PC-3 (cell line): ENCODE measurements at regions of chr3 and their contacts with region 1.

Region 1: GRCh38 chr3:133457465-133458067 is 57.7 kb downstream of the BFSP2 start:
- DNase-seq: peak; percentile 33
- ATAC-seq: no peak
- H3K4me3 ChIP-seq: no peak overlapping the region
- H3K27ac ChIP-seq: no peak overlapping the region
- H3K4me1 ChIP-seq: peaks cover 20% of the 10 kb centered on the region
- H3K27me3 ChIP-seq: no peaks in the 10 kb centered on the region
- CTCF ChIP-seq: peak; percentile 54; the same call in 1 of the 2 replicates

Region 2: GRCh38 chr3:133644768-133645167 is 187.2 kb after region 1 on chr3:
- CTCF ChIA-PET with region 1: no interaction called
- POLR2A ChIA-PET with region 1: no interaction called
- intact Hi-C with region 1: loop called (anchors 10 kb)
- DNase-seq: peak; percentile 85
- ATAC-seq: peak; percentile 95
- H3K4me3 ChIP-seq: no peak overlapping the region
- H3K27ac ChIP-seq: peak overlapping the region; percentile 19; the same call in 1 of the 2 replicates
- H3K4me1 ChIP-seq: peaks cover 20% of the 10 kb centered on the region
- H3K27me3 ChIP-seq: no peaks in the 10 kb centered on the region
- CTCF ChIP-seq: no peak

Region 3: GRCh38 chr3:133949438-133949837 is 491.9 kb after region 1 on chr3:
- CTCF ChIA-PET with region 1: no interaction called
- POLR2A ChIA-PET with region 1: no interaction called
- intact Hi-C with region 1: no loop called
- DNase-seq: no peak
- ATAC-seq: no peak
- H3K4me3 ChIP-seq: no peak overlapping the region
- H3K27ac ChIP-seq: no peak overlapping the region
- H3K4me1 ChIP-seq: peaks cover 15% of the 10 kb centered on the region
- H3K27me3 ChIP-seq: no peaks in the 10 kb centered on the region
- CTCF ChIP-seq: no peak